ENCODE measurements at regions of chr6 and their contacts with region 1.

Region 1: DNA sequence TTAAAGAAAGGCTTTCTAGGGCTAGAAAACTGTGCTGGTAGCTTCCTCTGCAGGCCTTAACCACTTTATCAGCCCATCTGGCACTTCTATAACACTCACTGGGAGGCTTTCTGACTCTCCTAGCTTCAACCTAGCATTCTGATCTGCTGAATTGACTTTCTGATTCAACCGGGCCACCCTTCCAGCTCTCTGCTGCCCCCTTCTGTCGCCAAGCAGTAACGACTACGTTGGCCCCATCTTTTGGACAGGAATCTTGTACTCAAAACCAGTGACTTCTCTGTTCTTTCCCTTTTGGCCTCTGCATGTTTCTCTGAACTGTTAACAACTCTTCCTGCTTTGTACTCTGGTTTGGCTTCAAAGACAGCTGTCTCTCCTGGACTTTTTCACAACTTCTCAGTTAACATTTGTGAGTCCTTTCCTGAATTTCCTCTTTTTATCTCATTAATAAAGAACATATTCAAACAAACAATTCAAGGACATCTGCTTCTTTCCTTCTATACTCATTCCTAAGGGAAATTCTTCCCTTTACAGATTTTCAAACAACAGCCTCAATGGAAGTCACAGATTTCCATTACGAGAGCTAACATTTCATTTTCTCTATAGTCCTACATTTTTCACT is 43.9 kb upstream of the FAM135A start:
- DNase-seq: peak; percentile 43
- H3K4me3 Mint-ChIP-seq: no peak overlapping the region
- H3K27ac Mint-ChIP-seq: no peak overlapping the region
- H3K4me1 Mint-ChIP-seq: no peaks in the 10 kb centered on the region
- H3K27me3 Mint-ChIP-seq: peaks cover 24% of the 10 kb centered on the region

Region 2: DNA sequence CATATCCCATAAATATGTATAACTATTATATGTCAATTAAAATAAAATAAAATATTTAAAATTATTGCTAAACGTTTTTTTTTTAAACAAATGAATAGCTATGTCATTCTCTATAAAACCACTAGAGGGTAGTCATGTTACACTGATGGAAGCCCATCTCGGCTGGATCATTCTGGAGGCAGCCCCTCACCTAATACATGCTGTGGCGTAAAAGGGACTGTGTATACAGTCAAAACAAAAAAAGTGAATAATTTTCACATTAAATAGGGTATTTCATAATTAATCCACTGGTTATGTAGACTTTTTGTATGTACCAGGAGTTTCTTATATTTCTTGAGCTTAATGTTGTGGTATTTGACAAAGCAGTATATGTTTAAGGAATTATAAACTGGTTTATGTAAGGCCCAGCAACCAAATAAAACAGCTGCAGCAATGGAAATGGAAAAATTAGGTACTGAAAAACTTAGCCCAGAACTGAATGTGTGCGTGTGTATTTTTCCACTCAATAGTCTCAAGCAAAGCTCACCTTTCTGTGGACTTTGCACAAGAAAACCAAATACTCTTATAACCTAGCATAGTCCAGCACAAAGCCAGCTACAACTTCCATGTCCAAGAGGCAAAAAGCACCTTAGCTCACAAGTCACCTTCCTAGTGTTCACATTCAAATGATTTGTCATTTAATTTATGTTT is 148.3 kb before region 1 on chr6:
- intact Hi-C with region 1: loop called (anchors 1 kb)
- DNase-seq: no peak
- H3K4me3 Mint-ChIP-seq: no peak overlapping the region
- H3K27ac Mint-ChIP-seq: no peak overlapping the region
- H3K4me1 Mint-ChIP-seq: no peaks in the 10 kb centered on the region
- H3K27me3 Mint-ChIP-seq: peaks cover 4% of the 10 kb centered on the region

Region 3: GRCh38 chr6:70310063-70310694 is 59.3 kb before region 1 on chr6:
- intact Hi-C with region 1: loop called (anchors 1 kb)
- DNase-seq: no peak
- H3K4me3 Mint-ChIP-seq: no peak overlapping the region
- H3K27ac Mint-ChIP-seq: no peak overlapping the region
- H3K4me1 Mint-ChIP-seq: peaks cover 6% of the 10 kb centered on the region
- H3K27me3 Mint-ChIP-seq: peaks cover 4% of the 10 kb centered on the region

Region 4: DNA sequence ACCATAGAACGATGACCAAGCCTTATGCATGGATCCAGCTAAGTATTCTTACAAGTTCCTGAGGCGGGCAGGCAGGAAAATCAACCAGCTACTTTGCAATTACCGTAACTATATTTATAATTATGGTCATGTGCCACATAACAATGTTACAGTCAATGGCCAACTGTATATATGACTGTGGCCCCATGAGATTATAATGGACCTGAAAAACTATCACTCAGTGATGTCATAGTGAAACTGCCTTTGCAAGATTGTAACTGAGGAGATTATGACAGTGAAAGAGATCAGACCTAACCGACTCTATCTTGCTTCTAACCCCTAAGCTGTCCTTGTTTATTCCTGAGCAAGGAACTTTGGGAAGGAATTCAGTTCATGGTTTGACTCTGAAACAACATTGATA is 10.8 kb after region 1 on chr6:
- intact Hi-C with region 1: no loop called
- DNase-seq: no peak
- H3K4me3 Mint-ChIP-seq: no peak overlapping the region
- H3K27ac Mint-ChIP-seq: no peak overlapping the region
- H3K4me1 Mint-ChIP-seq: no peaks in the 10 kb centered on the region
- H3K27me3 Mint-ChIP-seq: peaks cover 11% of the 10 kb centered on the region

Region 5: DNA sequence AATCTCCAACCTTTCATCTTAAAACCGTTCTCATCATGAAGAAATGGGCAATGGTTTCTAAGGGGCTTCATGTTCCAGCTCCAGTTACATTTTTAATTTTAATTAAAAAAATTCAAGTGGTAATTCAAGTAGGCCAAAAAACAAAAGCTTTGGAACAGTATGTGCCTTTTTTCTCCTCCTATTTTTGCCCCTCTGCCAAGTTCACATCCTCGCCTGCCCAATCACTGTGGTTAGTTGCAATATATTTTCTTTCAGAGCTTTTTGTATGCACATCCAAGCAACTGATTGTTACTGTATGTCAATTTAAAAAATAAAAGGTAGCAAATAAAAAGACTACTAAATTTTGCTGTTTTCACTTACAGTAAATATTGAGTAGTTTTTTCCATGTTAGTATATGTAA is 687.2 kb after region 1 on chr6:
- intact Hi-C with region 1: no loop called
- DNase-seq: no peak
- H3K4me3 Mint-ChIP-seq: no peak overlapping the region
- H3K27ac Mint-ChIP-seq: no peak overlapping the region
- H3K4me1 Mint-ChIP-seq: no peaks in the 10 kb centered on the region
- H3K27me3 Mint-ChIP-seq: no peaks in the 10 kb centered on the region

Measured in activated T-helper 1 cell treated with anti-CD3 and anti-CD28 coated beads, Interleukin-12 subunit alpha, Interleukin-12 subunit beta, Interleukin-2, Interleukin-4 antibody, amounts not matched to agents 30 ng/mL and 10 ng/mL and 1 ng/mL, durations not matched to agents 14 hours and 24 hours and 36 hours (primary cell).